Naive thymus-derived CD4-positive, alpha-beta T cell (primary cell): ENCODE measurements at regions of chr11 and their contacts with region 1.

Region 1: DNA sequence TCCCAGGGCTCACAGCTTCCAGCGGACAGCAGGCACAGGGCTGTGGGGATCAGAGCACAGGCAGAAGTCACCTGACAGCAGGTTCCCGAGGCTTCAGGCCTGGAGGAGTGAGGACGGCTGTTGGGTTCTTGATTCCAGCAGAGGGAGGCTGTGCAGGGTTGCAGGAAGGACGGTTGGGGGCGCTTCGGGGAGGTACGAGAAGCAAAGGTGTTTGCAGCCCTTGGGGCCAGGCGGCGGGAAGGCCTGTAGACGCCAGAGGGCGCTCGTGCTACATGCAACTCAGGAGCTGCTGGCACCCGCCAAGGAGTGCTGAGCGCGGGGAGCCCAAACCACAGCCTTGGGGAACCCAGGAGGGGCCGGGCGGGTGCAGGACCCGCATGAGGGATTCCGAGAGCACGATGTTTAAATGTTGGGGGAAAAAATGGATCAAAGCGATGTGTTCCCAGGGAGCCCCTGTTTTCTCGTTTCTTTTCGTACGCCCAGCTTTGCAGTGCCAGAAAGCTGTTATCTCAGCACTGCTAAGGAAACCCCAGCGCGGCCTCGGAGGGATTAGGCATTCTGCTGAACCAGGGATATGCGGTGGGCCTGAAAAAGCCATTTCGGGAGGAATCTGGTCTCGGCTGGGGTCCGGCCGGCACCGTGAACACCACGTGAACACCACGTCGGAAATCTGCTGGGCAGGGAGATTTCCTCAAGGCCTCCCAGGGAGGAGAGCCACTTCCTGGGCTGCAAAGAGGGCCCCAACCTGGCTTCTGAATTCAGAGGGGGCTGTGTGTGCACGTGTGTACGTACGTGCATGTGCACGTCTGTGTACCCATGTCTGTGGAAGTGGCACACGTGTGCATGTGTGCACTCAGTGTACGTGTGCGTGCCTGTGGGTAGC is 88.1 kb downstream of the KCNQ1 start:
- DNase-seq: peak; percentile 81 to 95 (median 89)
- ATAC-seq: peak; percentile 91
- H3K4me3 ChIP-seq: peak overlapping the region; percentile 21
- H3K4me3 Mint-ChIP-seq: peak overlapping the region; percentile 64 to 83 (median 76)
- H3K27ac ChIP-seq: no peak overlapping the region
- H3K27ac Mint-ChIP-seq: peak overlapping the region in 5 of 9 donors; percentile 5 to 88 (median 71)
- H3K4me1 ChIP-seq: peaks cover 4 to 15% of the 10 kb centered on the region in 2 donors
- H3K4me1 Mint-ChIP-seq: peaks cover 9 to 29% (median 25%) of the 10 kb centered on the region in 7 donors
- H3K27me3 ChIP-seq: no peaks in the 10 kb centered on the region
- H3K27me3 Mint-ChIP-seq: peaks cover 0 to 2% (median 0%) of the 10 kb centered on the region in 5 donors

Region 2: GRCh38 chr11:2305140-2305840 is 227.7 kb before region 1 on chr11:
- CTCF ChIA-PET with region 1: interaction called, 6 read pairs
- POLR2A ChIA-PET with region 1: no interaction called
- intact Hi-C with region 1: loop called (anchors 1 to 5 kb)
- DNase-seq: peak; percentile 62 to 84 (median 76)
- ATAC-seq: peak; percentile 65
- H3K4me3 ChIP-seq: peak overlapping the region; percentile 38
- H3K4me3 Mint-ChIP-seq: peak overlapping the region; percentile 77 to 98 (median 92)
- H3K27ac ChIP-seq: peak overlapping the region; percentile 81
- H3K27ac Mint-ChIP-seq: peak overlapping the region; percentile 86 to 96 (median 90)
- H3K4me1 ChIP-seq: peaks cover 40 to 55% of the 10 kb centered on the region in 2 donors
- H3K4me1 Mint-ChIP-seq: peaks cover 12 to 54% (median 36%) of the 10 kb centered on the region in 7 donors
- H3K27me3 ChIP-seq: no peaks in the 10 kb centered on the region
- H3K27me3 Mint-ChIP-seq: no peaks in the 10 kb centered on the region

Region 3: DNA sequence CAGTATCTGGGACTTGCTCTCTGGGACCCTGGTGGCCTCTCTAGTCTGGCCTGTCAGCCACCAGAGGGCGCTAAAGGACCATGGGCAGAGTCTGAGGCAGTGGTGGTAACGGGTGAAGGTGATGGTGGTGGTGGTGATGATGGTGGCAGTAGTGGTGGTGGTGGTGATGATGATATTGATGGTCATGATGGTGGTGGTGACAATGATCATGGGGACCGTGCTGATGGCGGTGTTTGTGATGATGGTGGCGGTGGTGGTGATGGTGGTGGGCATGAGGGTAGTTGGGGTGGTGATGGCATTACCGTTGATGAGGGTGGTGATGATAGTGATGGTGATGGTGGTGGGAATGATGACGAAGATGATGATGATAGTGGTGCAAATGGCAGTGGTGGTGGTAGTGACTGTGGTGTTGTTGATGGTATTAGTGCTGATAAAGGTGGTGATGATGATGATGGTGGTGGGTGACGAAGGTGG is 104.6 kb before region 1 on chr11:
- CTCF ChIA-PET with region 1: interaction called, 77 read pairs
- POLR2A ChIA-PET with region 1: interaction called, 8 read pairs
- intact Hi-C with region 1: loop called in 1 of 2 experiments (anchors 1 kb)
- DNase-seq: peak; percentile 67 to 85 (median 79)
- ATAC-seq: peak; percentile 87
- H3K4me3 ChIP-seq: no peak overlapping the region
- H3K4me3 Mint-ChIP-seq: no peak overlapping the region
- H3K27ac ChIP-seq: no peak overlapping the region
- H3K27ac Mint-ChIP-seq: no peak overlapping the region
- H3K4me1 ChIP-seq: no peaks in the 10 kb centered on the region
- H3K4me1 Mint-ChIP-seq: peaks cover 0 to 4% (median 0%) of the 10 kb centered on the region in 7 donors
- H3K27me3 ChIP-seq: no peaks in the 10 kb centered on the region
- H3K27me3 Mint-ChIP-seq: no peaks in the 10 kb centered on the region

Region 4: GRCh38 chr11:2885676-2886081 is 352.7 kb after region 1 on chr11 and contains the start of gene CDKN1C:
- CTCF ChIA-PET with region 1: interaction called, 197 read pairs
- POLR2A ChIA-PET with region 1: interaction called, 19 read pairs
- intact Hi-C with region 1: loop called (anchors 1 kb)
- DNase-seq: peak; percentile 82 to 87 (median 85)
- ATAC-seq: peak; percentile 95
- H3K4me3 ChIP-seq: peak within 1 kb of the TSS; percentile 75
- H3K4me3 Mint-ChIP-seq: peak within 1 kb of the TSS; percentile 85 to 96 (median 92)
- H3K27ac ChIP-seq: peak within 1 kb of the TSS; percentile 68
- H3K27ac Mint-ChIP-seq: peak within 1 kb of the TSS in 8 of 9 donors; percentile 26 to 93 (median 80)
- H3K4me1 ChIP-seq: peaks cover 5 to 7% of the 10 kb centered on the region in 2 donors
- H3K4me1 Mint-ChIP-seq: peaks cover 0 to 32% (median 22%) of the 10 kb centered on the region in 7 donors
- H3K27me3 ChIP-seq: no peaks in the 10 kb centered on the region
- H3K27me3 Mint-ChIP-seq: peaks cover 0 to 43% (median 0%) of the 10 kb centered on the region in 5 donors
- total RNA-seq, gene CDKN1C: 0.53 to 36.0 (median 6.0) TPM

Region 5: DNA sequence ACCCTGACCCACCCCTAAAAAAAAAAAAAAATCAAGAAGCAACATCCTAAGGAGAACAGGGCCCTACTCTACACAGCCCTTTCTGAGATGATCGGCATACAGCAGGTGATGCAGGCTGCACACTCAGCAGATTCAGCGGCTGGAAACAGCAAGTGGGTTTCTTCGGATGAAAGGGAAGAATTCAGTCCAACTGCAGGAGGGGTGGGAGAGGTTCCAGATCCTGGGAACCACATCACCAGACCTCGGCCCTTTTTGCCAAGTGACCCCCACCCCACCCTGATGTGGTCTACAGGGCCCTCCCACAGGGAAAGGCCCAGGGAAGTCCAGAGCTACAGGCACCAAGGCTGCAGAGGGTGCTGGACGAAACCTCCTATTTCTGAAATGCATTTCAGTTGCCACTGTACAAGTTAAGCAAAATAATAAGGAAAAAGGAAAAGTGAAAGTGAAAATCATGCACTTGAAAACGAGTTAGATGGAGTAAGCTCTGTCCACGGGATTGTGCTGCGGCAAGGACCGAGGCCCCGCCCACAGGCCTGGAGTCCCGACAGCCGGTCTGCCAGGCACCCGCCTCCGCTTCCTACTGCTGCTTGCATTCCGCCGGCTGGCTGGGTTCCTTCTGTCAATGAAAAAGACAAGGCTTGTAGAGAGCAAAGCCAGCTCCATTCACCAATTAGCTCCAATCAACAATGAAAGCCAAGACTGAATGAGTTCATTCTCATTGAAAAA is 412.2 kb after region 1 on chr11:
- CTCF ChIA-PET with region 1: interaction called, 3 read pairs
- POLR2A ChIA-PET with region 1: no interaction called
- intact Hi-C with region 1: loop called in 1 of 2 experiments (anchors 5 kb)
- DNase-seq: peak in 7 of 9 donors; percentile 33 to 65 (median 48)
- ATAC-seq: peak; percentile 52
- H3K4me3 ChIP-seq: no peak overlapping the region
- H3K4me3 Mint-ChIP-seq: peak overlapping the region; percentile 25 to 76 (median 56)
- H3K27ac ChIP-seq: peak overlapping the region; percentile 41
- H3K27ac Mint-ChIP-seq: peak overlapping the region; percentile 0 to 86 (median 80)
- H3K4me1 ChIP-seq: peaks cover 0 to 17% of the 10 kb centered on the region in 2 donors
- H3K4me1 Mint-ChIP-seq: peaks cover 27 to 66% (median 59%) of the 10 kb centered on the region in 7 donors
- H3K27me3 ChIP-seq: no peaks in the 10 kb centered on the region
- H3K27me3 Mint-ChIP-seq: no peaks in the 10 kb centered on the region

Region 6: DNA sequence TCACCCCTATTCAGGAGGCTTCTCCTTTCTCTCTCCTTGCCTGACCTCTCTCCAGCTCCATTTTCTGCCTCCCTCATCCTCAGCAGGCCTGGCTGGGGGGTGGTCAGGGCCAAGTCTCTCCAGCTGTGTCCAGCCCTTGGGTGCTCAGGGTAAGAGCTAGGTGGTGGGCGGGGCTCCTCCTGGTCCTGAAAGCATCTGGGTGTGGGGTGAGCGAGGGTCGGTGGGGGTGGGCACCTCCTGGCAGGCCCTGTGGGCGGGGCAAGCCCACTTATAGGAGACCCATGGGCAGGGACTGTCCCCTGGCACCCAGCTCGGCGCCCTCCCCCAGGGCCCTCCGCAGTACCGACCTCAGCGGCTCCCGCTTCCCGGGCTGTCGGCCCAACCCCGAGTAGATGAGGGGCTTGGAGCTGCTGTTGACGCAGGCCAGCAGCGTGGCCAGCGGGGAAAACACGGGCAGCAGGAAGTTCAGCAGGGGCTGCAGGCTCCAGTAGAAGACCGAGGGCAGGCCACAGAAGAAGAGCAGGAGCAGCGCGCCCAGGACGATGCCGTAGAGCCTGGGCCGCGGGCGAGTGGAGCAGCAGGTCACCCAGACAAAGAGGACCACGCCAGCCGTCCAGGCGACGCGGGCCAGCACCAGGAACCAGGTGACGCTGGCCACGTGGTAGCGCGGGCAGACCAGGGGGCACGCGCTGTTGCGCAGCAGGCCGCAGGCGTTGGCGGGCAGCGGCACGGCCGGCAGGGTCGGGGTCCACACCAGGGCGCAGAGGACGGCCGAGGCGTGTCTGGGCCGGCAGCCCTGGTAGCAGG is 684.9 kb after region 1 on chr11:
- CTCF ChIA-PET with region 1: interaction called, 5 read pairs
- POLR2A ChIA-PET with region 1: no interaction called
- intact Hi-C with region 1: loop called in 1 of 2 experiments (anchors 2 kb)
- DNase-seq: no peak
- ATAC-seq: no peak
- H3K4me3 ChIP-seq: no peak overlapping the region
- H3K4me3 Mint-ChIP-seq: no peak overlapping the region
- H3K27ac ChIP-seq: no peak overlapping the region
- H3K27ac Mint-ChIP-seq: no peak overlapping the region
- H3K4me1 ChIP-seq: peaks cover 0 to 3% of the 10 kb centered on the region in 2 donors
- H3K4me1 Mint-ChIP-seq: peaks cover 4 to 11% (median 7%) of the 10 kb centered on the region in 7 donors
- H3K27me3 ChIP-seq: no peaks in the 10 kb centered on the region
- H3K27me3 Mint-ChIP-seq: peaks cover 7 to 30% (median 14%) of the 10 kb centered on the region in 5 donors